HepG2 (cell line): ENCODE measurements at regions of chr9 and their contacts with region 1.

Region 1: GRCh38 chr9:117399844-117400561 is 14.9 kb downstream of the ASTN2 start:
- DNase-seq: no peak
- ATAC-seq: no peak
- H3K4me3 ChIP-seq: no peak overlapping the region
- H3K27ac ChIP-seq: no peak overlapping the region
- H3K4me1 ChIP-seq: no peaks in the 10 kb centered on the region
- H3K27me3 ChIP-seq: no peaks in the 10 kb centered on the region
- CTCF ChIP-seq: no peak
- EP300 ChIP-seq: no peak
- POLR2A ChIP-seq: no peak
- RAD21 ChIP-seq: no peak

Region 2: DNA sequence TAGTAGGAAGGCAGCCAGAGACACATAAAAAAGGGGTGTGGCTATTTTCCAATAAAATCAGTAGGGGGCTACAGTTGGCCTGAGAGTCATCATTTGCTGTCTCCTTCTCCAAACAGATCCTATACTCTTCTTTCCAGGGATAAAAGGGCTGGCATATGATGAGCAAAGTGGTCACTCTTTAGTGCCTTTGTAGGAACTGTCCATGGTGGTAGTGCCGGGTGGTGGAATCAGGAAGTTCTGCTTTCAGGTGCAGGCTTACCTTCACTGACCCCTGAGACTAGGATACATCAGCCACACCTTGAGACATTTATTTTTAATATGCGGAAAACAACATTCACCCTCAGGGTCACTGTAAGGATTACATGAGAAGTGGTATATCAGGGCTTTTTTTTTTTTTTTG is 65.9 kb before region 1 on chr9:
- CTCF ChIA-PET with region 1: no interaction called
- POLR2A ChIA-PET with region 1: no interaction called
- in situ Hi-C with region 1: loop called (anchors 10 kb)
- intact Hi-C with region 1: no loop called
- DNase-seq: no peak
- ATAC-seq: no peak
- H3K4me3 ChIP-seq: no peak overlapping the region
- H3K27ac ChIP-seq: no peak overlapping the region
- H3K4me1 ChIP-seq: no peaks in the 10 kb centered on the region
- H3K27me3 ChIP-seq: no peaks in the 10 kb centered on the region
- CTCF ChIP-seq: no peak
- EP300 ChIP-seq: no peak
- POLR2A ChIP-seq: no peak
- RAD21 ChIP-seq: no peak

Region 3: GRCh38 chr9:117437283-117437682 is 37.3 kb after region 1 on chr9:
- CTCF ChIA-PET with region 1: no interaction called
- POLR2A ChIA-PET with region 1: no interaction called
- in situ Hi-C with region 1: no loop called
- intact Hi-C with region 1: no loop called
- DNase-seq: no peak
- ATAC-seq: no peak
- H3K4me3 ChIP-seq: no peak overlapping the region
- H3K27ac ChIP-seq: no peak overlapping the region
- H3K4me1 ChIP-seq: no peaks in the 10 kb centered on the region
- H3K27me3 ChIP-seq: no peaks in the 10 kb centered on the region
- CTCF ChIP-seq: no peak
- EP300 ChIP-seq: no peak
- POLR2A ChIP-seq: no peak
- RAD21 ChIP-seq: no peak

Region 4: DNA sequence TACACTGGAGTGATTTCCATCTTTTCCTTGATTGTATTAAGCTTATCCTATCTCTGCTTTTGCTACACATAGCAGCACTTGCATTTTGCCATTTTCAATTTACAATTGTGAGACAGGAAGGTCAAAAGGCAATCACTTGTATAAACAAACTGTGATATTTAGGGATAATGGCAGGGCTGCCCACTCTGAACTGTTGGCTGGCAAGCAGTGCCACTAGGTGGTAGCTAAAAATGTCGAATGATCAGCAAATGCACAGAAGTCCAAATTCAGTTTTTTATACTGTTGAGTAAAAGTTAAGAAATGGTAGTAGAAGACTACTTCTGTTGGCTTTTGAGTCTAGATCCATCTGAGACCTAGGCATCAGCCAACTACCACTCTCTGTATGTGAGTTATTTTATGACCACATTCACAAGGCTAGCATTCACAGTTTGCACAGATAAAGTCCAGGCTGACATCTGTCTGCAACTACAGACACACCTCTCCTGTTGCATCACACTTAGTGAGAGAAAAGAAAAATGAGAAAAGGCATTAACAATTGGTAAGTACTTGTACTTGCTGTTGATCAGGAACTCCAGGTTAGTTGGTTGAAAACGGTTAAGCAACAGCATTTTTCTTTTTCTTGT is 123.6 kb after region 1 on chr9:
- CTCF ChIA-PET with region 1: no interaction called
- POLR2A ChIA-PET with region 1: no interaction called
- in situ Hi-C with region 1: no loop called
- intact Hi-C with region 1: no loop called
- DNase-seq: no peak
- ATAC-seq: peak; percentile 72
- H3K4me3 ChIP-seq: no peak overlapping the region
- H3K27ac ChIP-seq: no peak overlapping the region
- H3K4me1 ChIP-seq: no peaks in the 10 kb centered on the region; the same call in 1 of the 2 replicates
- H3K27me3 ChIP-seq: no peaks in the 10 kb centered on the region
- CTCF ChIP-seq: no peak
- EP300 ChIP-seq: no peak
- POLR2A ChIP-seq: no peak
- RAD21 ChIP-seq: no peak

Region 5: GRCh38 chr9:117622347-117622746 is 222.3 kb after region 1 on chr9:
- CTCF ChIA-PET with region 1: no interaction called
- POLR2A ChIA-PET with region 1: no interaction called
- in situ Hi-C with region 1: no loop called
- intact Hi-C with region 1: no loop called
- DNase-seq: no peak
- ATAC-seq: no peak
- H3K4me3 ChIP-seq: no peak overlapping the region
- H3K27ac ChIP-seq: no peak overlapping the region
- H3K4me1 ChIP-seq: no peaks in the 10 kb centered on the region
- H3K27me3 ChIP-seq: no peaks in the 10 kb centered on the region
- CTCF ChIP-seq: no peak
- EP300 ChIP-seq: no peak
- POLR2A ChIP-seq: no peak
- RAD21 ChIP-seq: no peak